Pancreas (tissue), 10 donors: ENCODE measurements at regions of chr12 and their contacts with region 1.

Region 1: DNA sequence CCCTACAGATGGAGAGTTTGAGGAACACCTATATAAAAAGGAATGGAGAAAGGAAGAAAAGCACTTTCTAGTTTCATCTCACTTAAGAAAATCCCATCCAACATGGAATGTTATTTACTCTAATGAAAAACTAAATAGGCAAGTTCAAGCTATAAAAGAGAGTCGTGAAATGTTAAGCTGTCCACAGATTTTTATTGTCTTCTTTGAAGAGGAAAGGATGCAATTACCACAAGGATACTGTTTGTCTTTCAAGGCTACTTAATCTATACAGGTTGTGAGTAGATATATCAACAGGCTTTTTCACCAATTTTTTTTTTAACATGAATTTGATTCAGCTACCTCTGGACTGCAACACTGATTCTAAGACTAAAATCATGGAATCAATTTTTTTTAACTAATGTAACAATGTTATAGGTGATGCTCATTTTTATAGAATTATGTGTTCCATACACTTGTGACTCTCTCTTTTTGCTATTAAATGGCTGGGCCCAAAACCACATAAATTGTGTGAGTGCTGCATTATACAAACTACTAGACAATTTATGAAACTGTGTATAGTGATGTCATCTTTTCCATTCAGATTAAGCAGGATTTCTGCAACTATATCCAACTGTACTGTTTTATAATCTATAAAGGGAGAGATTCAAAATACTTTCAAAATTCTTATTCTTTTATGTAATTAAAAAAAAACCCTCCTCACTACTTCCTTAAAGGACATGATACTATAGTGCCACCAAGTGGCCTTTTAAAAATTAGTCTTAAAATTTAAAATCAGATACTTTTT is 26.8 kb upstream of the BMAL2 start:
- DNase-seq: no peak
- ATAC-seq: peak in 3 of 4 donors; percentile 66 to 74 (median 68)
- H3K4me3 ChIP-seq: no peak overlapping the region
- H3K27ac ChIP-seq: no peak overlapping the region
- H3K4me1 ChIP-seq: peaks cover 0 to 17% (median 11%) of the 10 kb centered on the region in 3 donors
- H3K27me3 ChIP-seq: no peaks in the 10 kb centered on the region
- CTCF ChIP-seq: peak in 3 of 4 donors; percentile 39 to 42 (median 41)

Region 2: DNA sequence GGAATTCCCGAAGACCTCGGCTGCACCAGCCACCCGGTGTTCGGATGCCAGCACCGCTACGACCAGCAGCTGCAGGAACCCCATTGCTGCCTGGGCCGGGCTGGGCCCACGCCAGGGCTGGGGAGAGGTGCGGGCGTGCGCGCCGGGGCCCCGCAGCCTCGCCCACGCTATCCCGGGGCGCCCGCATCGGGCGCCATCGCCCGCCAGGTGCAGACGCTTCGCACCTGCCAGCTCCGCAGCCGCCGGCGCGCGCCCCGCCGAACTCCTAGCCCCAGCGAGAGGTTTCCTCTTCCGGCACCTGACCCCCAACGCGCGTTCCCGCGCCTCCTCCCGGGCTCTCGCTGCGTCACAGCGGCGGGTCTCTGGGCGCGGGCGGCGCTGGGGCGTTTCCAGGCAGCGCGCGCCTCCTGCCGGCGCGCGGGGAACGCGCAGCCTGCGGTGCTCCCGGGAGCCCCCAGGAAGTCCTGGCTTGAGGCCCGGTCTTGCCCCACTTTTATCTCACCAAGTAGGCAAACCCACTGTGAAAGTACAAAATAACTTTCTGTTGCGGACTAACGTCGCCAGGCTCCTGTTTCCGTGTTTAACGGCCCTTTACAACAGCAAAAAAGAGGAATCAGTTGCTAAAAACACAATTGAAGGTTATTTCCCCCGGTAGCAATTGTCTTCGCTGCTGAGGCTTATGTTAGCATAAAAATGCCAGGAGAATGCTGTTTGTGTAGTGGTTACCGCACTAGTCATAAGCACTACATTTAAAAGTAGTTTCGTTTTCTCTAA is 291.6 kb before region 1 on chr12 and contains the start of gene TM7SF3:
- intact Hi-C with region 1: loop called in 2 of 3 experiments (anchors 5 to 10 kb)
- DNase-seq: peak; percentile 94 to 98 (median 96)
- ATAC-seq: peak; percentile 85 to 93 (median 88)
- H3K4me3 ChIP-seq: peak within 1 kb of the TSS; percentile 57 to 90 (median 76)
- H3K27ac ChIP-seq: peak within 1 kb of the TSS; percentile 72 to 97 (median 92)
- H3K4me1 ChIP-seq: peaks cover 28 to 40% (median 29%) of the 10 kb centered on the region in 3 donors
- H3K27me3 ChIP-seq: no peaks in the 10 kb centered on the region
- CTCF ChIP-seq: peak; percentile 92 to 98 (median 98)
- total RNA-seq, gene TM7SF3: 36.9 to 67.6 (median 54.4) TPM